ENCODE measurements at regions of chrX and their contacts with region 1.

Region 1: GRCh38 chrX:153667956-153668396 is 5.6 kb downstream of the PNCK start:
- DNase-seq: peak; percentile 41 to 74
- ATAC-seq: peak; percentile 77 to 90
- H3K4me3 ChIP-seq: no peak overlapping the region
- H3K27ac ChIP-seq: no peak overlapping the region
- H3K4me1 ChIP-seq: peaks cover 0 to 5% of the 10 kb centered on the region in 2 donors
- H3K27me3 ChIP-seq: peaks cover 0 to 7% (median 5%) of the 10 kb centered on the region in 3 donors
- CTCF ChIP-seq: peak; percentile 47 to 79 (median 70)
- POLR2A ChIP-seq: no peak

Region 2: GRCh38 chrX:153499876-153500275 is 168.1 kb before region 1 on chrX:
- in situ Hi-C with region 1: no loop called
- intact Hi-C with region 1: no loop called
- DNase-seq: no peak
- ATAC-seq: no peak
- H3K4me3 ChIP-seq: no peak overlapping the region
- H3K27ac ChIP-seq: no peak overlapping the region
- H3K4me1 ChIP-seq: no peaks in the 10 kb centered on the region
- H3K27me3 ChIP-seq: peaks cover 0 to 17% (median 4%) of the 10 kb centered on the region in 3 donors
- CTCF ChIP-seq: no peak
- POLR2A ChIP-seq: no peak

Region 3: DNA sequence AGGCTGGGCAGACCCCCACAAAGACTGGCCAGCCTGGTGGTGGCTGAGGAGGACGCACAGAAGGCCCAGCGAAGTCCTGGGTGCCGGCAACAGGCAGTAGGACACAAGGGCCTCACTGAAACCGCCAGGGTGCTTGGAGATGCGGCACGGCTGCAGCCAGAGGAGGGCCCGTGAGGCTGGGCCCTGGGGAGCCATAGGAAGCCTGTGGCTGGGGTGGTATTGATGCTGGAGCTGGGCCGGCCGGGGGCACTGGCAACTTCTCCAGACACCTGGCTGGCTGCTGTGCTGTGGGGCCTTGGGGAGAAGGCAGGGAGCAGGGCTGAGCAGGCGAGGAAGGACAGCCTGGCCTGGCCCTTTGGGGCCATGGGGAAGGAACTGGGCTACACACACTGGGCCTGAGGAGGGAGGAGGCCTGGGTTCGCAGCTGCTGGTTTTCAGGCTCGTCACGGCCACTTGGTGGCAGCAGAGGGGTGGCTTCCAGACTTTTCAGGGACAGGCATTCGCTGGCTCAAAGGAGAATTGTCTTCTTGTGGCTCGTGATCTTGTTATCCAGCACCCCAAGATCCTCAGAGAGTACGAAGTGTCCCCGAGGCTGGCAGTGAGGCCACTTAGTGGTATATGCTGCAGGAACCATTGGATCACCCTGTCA is 113.3 kb before region 1 on chrX:
- in situ Hi-C with region 1: loop called (anchors 5 to 10 kb)
- intact Hi-C with region 1: loop called (anchors 1 kb)
- DNase-seq: peak; percentile 23 to 57
- ATAC-seq: peak; percentile 39 to 78
- H3K4me3 ChIP-seq: no peak overlapping the region
- H3K27ac ChIP-seq: no peak overlapping the region
- H3K4me1 ChIP-seq: no peaks in the 10 kb centered on the region
- H3K27me3 ChIP-seq: no peaks in the 10 kb centered on the region
- CTCF ChIP-seq: peak; percentile 24 to 65 (median 58)
- POLR2A ChIP-seq: no peak

Region 4: GRCh38 chrX:153609917-153610428 is 58.0 kb before region 1 on chrX:
- in situ Hi-C with region 1: no loop called
- intact Hi-C with region 1: loop called (anchors 2 kb)
- DNase-seq: peak in 1 of 2 donors; percentile 47
- ATAC-seq: peak in 1 of 2 donors; percentile 88
- H3K4me3 ChIP-seq: peak overlapping the region; percentile 39 to 55 (median 45)
- H3K27ac ChIP-seq: no peak overlapping the region
- H3K4me1 ChIP-seq: peaks cover 0 to 7% of the 10 kb centered on the region in 2 donors
- H3K27me3 ChIP-seq: peaks cover 0 to 8% (median 0%) of the 10 kb centered on the region in 3 donors
- CTCF ChIP-seq: peak; percentile 45 to 84 (median 68)
- POLR2A ChIP-seq: no peak